ENCODE measurements at regions of chr6 and their contacts with region 1.

Region 1: GRCh38 chr6:136103763-136104311 is 146.3 kb downstream of the MTFR2 start:
- DNase-seq: no peak
- H3K4me3 ChIP-seq: no peak overlapping the region
- H3K27ac ChIP-seq: no peak overlapping the region
- H3K4me1 ChIP-seq: no peaks in the 10 kb centered on the region
- H3K27me3 ChIP-seq: peaks cover 3% of the 10 kb centered on the region
- CTCF ChIP-seq: no peak

Region 2: DNA sequence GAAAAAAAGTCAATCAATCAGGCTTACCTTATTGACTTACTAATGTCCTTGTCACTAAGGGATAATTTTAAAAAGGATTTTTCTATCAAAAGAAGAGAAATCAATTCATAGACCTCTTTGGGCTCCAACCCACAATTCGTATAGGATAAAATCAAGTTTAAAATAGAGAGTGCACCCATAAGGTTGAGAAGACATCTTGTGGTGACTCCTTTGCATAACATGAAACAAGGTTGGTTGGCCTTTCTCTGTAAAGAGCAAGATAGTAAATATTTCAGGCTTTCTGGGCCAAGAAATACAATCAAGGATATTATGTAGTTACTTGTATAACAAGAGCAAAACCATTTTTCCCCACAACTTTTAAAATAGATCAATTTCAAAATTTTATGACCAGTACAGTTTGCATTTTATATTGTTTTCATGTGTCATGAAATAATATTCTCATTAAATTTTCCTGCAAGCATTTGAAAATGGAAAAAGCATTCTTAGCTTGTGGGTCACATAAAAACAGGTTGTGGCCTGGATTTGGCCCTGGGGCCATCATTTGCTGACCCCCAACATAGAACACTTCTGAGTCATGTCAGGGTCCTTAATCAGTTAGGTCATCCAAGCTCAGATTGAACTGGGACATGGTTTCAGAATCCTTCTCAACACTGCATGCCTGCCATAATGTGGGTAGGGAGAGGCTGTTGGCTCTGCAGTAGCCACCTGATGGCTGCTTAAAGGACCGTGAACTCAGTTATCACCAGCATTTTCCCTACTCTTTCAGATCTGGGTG is 846.0 kb before region 1 on chr6:
- CTCF ChIA-PET with region 1: no interaction called
- dilution Hi-C with region 1: no loop called
- in situ Hi-C with region 1: no loop called
- intact Hi-C with region 1: no loop called
- DNase-seq: no peak
- H3K4me3 ChIP-seq: no peak overlapping the region
- H3K27ac ChIP-seq: no peak overlapping the region
- H3K4me1 ChIP-seq: no peaks in the 10 kb centered on the region
- H3K27me3 ChIP-seq: no peaks in the 10 kb centered on the region
- CTCF ChIP-seq: peak; percentile 11 to 43

Region 3: DNA sequence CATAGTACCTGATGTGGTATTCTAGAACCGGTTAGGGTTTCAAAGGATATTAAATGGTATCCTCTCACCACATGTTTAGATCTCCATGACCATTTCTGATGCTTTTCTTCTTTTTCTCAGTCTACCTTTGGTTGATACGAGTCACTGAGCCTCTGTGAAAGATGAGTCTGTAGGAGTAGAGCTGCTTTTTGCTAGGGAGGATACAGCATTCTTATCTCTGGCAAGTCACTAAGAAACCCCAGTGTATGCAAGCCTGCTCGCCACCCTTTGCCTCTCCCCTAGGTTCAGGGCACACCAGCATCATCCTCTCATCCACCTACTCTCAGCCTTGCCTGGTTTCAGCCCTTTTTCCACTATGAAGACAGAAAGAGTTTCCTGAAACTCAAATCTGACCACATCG is 56.4 kb after region 1 on chr6:
- CTCF ChIA-PET with region 1: no interaction called
- dilution Hi-C with region 1: loop called (anchors 5 kb)
- in situ Hi-C with region 1: no loop called
- intact Hi-C with region 1: no loop called
- DNase-seq: no peak
- H3K4me3 ChIP-seq: no peak overlapping the region
- H3K27ac ChIP-seq: no peak overlapping the region
- H3K4me1 ChIP-seq: no peaks in the 10 kb centered on the region
- H3K27me3 ChIP-seq: peaks cover 4% of the 10 kb centered on the region
- CTCF ChIP-seq: no peak

Region 4: DNA sequence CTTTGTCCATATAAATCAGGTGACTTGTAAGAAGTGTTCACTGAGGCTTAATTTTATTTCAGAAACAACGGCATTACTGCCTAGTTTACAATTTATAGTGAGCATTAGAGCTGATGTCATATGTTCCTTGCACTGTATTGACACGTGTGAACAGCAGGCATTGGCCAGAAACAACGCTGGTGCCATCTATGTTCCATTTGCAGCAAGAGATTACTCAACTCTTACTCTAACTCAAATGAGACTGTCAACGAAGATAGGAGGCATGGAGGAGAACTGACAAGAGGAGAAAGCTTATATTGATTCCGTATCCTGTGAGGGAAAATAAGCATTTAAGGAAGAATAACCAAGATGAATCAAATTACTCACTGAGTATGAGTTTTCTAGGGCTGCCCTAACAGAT is 97.9 kb after region 1 on chr6:
- CTCF ChIA-PET with region 1: no interaction called
- dilution Hi-C with region 1: loop called (anchors 5 kb)
- in situ Hi-C with region 1: no loop called
- intact Hi-C with region 1: no loop called
- DNase-seq: no peak
- H3K4me3 ChIP-seq: no peak overlapping the region
- H3K27ac ChIP-seq: no peak overlapping the region
- H3K4me1 ChIP-seq: no peaks in the 10 kb centered on the region
- H3K27me3 ChIP-seq: no peaks in the 10 kb centered on the region
- CTCF ChIP-seq: no peak